ENCODE measurements at regions of chr5 and their contacts with region 1.

Region 1: GRCh38 chr5:77491783-77492652 is at the start of gene WDR41:
- DNase-seq: peak; percentile 86 to 93
- ATAC-seq: peak; percentile 87 to 96 (median 89)
- H3K4me3 ChIP-seq: peak within 1 kb of the TSS; percentile 100
- H3K4me3 Mint-ChIP-seq: peak within 1 kb of the TSS; percentile 92
- H3K27ac ChIP-seq: peak within 1 kb of the TSS; percentile 96
- H3K27ac Mint-ChIP-seq: peak within 1 kb of the TSS; percentile 86 to 90
- H3K4me1 ChIP-seq: peaks cover 6% of the 10 kb centered on the region
- H3K4me1 Mint-ChIP-seq: peaks cover 10 to 14% of the 10 kb centered on the region in 2 donors
- H3K27me3 ChIP-seq: no peaks in the 10 kb centered on the region
- H3K27me3 Mint-ChIP-seq: peaks cover 0 to 15% of the 10 kb centered on the region in 2 donors
- CTCF ChIP-seq: peak; percentile 94
- total RNA-seq, gene WDR41: 20.7 to 25.5 (median 24.9) TPM

Region 2: DNA sequence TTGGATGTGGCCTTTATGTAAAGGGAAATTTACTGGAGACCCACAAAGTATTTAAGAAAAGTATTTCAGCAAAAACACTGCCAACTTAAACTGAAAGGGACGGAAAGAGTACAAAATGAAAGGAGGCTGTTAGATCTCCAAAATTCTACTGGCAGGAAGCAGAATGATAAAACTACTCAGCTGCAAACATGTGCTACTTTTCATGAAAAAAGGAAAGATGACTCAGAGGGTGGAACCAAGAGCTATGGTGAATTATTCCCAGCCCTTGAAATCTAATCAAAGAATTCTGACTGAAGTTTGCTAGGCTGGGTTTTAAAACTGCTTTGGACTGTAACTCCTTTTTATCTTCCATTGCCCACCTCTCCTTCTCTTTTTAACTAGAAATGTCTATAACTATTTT is 346.4 kb before region 1 on chr5:
- intact Hi-C with region 1: loop called (anchors 1 kb)
- DNase-seq: no peak
- ATAC-seq: no peak
- H3K4me3 ChIP-seq: no peak overlapping the region
- H3K4me3 Mint-ChIP-seq: no peak overlapping the region
- H3K27ac ChIP-seq: no peak overlapping the region
- H3K27ac Mint-ChIP-seq: no peak overlapping the region
- H3K4me1 ChIP-seq: no peaks in the 10 kb centered on the region
- H3K4me1 Mint-ChIP-seq: no peaks in the 10 kb centered on the region
- H3K27me3 ChIP-seq: no peaks in the 10 kb centered on the region
- H3K27me3 Mint-ChIP-seq: peaks cover 7 to 21% of the 10 kb centered on the region in 2 donors
- CTCF ChIP-seq: no peak

Region 3: DNA sequence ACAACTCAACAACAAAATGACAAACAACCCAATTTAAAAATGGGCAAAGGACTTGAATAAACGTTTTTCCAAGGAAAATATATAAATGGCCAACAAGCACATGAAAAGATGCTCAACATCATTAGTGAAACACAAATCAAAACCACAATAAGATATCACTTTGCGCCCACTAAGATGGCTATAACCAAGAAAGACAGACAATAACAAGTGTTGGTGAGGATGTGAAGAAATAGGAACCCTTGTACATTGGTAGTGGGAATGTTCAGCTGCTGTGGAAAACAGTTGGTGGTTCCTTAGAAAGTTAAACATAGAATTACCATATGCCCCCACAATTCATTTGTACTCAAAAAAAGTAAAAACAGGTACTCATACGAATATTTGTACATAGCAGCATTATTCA is 39.3 kb after region 1 on chr5:
- intact Hi-C with region 1: no loop called
- DNase-seq: no peak
- ATAC-seq: no peak
- H3K4me3 ChIP-seq: no peak overlapping the region
- H3K4me3 Mint-ChIP-seq: no peak overlapping the region
- H3K27ac ChIP-seq: no peak overlapping the region
- H3K27ac Mint-ChIP-seq: no peak overlapping the region
- H3K4me1 ChIP-seq: no peaks in the 10 kb centered on the region
- H3K4me1 Mint-ChIP-seq: no peaks in the 10 kb centered on the region
- H3K27me3 ChIP-seq: peaks cover 9% of the 10 kb centered on the region
- H3K27me3 Mint-ChIP-seq: peaks cover 8 to 61% of the 10 kb centered on the region in 2 donors
- CTCF ChIP-seq: no peak

Region 4: DNA sequence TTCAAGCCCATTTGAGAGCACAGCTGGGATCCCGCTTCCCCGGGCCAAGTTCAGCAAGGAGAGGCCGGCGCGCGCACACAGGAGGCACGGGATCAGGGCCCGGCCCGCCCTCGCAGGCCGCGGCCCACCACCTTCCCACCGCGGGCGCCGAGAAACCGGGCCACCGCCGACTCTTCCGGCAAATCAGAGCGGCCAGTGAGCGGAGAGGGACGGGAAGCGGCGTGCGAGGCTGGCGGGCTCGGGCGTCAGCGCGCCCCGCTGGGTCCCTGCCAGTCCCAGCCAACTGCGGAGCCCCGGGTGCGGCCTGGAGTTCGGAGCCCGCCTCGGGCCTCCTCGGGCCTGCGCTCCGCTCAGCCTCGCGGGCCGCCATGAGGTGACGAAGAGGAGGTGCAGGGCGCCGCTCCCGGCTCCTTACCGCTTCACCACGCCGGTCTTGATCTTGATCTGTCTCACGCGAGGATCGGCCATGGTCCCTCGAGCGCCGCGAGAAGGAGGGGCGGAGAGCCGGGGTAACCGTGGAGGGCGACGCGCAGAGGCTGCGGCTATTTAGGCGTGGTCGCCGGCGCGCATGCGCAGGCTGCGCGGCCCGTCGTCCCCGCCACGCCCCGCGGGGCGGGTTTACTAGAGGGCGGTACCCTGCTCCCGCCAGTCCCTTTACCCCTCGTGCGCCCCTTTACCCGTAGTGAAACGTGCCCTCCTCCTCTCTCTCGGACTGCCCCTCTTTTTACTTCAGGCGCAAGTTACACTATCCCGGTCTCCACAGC is 284.0 kb after region 1 on chr5 and contains the start of gene TBCA:
- intact Hi-C with region 1: loop called (anchors 10 kb)
- DNase-seq: peak; percentile 90 to 97
- ATAC-seq: peak; percentile 82 to 92 (median 83)
- H3K4me3 ChIP-seq: peak within 1 kb of the TSS; percentile 75
- H3K4me3 Mint-ChIP-seq: peak within 1 kb of the TSS; percentile 97
- H3K27ac ChIP-seq: peak within 1 kb of the TSS; percentile 99
- H3K27ac Mint-ChIP-seq: peak within 1 kb of the TSS; percentile 90 to 98
- H3K4me1 ChIP-seq: peaks cover 12% of the 10 kb centered on the region
- H3K4me1 Mint-ChIP-seq: peaks cover 39 to 44% of the 10 kb centered on the region in 2 donors
- H3K27me3 ChIP-seq: no peaks in the 10 kb centered on the region
- H3K27me3 Mint-ChIP-seq: no peaks in the 10 kb centered on the region
- CTCF ChIP-seq: no peak
- total RNA-seq, gene TBCA: 65.0 to 72.3 (median 70.7) TPM

Region 5: GRCh38 chr5:78747705-78748359 is 1255.8 kb after region 1 on chr5:
- intact Hi-C with region 1: no loop called
- DNase-seq: no peak
- ATAC-seq: no peak
- H3K4me3 ChIP-seq: no peak overlapping the region
- H3K4me3 Mint-ChIP-seq: no peak overlapping the region
- H3K27ac ChIP-seq: no peak overlapping the region
- H3K27ac Mint-ChIP-seq: no peak overlapping the region
- H3K4me1 ChIP-seq: no peaks in the 10 kb centered on the region
- H3K4me1 Mint-ChIP-seq: no peaks in the 10 kb centered on the region
- H3K27me3 ChIP-seq: no peaks in the 10 kb centered on the region
- H3K27me3 Mint-ChIP-seq: peaks cover 6 to 35% of the 10 kb centered on the region in 2 donors
- CTCF ChIP-seq: no peak